GM10248 (cell line): ENCODE measurements at regions of chr11 and their contacts with region 1.

Region 1: GRCh38 chr11:76152086-76152681 is 54.1 kb downstream of the WNT11 start:
- DNase-seq: peak; percentile 91
- CTCF ChIP-seq: peak; percentile 99

Region 2: GRCh38 chr11:75717608-75718418 is 434.4 kb before region 1 on chr11 and contains the start of gene MOGAT2:
- CTCF ChIA-PET with region 1: interaction called, 19 read pairs
- POLR2A ChIA-PET with region 1: no interaction called
- DNase-seq: no peak
- CTCF ChIP-seq: no peak

Region 3: GRCh38 chr11:75814686-75815344 is 337.4 kb before region 1 on chr11 and contains the start of gene UVRAG:
- CTCF ChIA-PET with region 1: interaction called, 12 read pairs
- POLR2A ChIA-PET with region 1: no interaction called
- DNase-seq: peak; percentile 96
- CTCF ChIP-seq: no peak

Region 4: DNA sequence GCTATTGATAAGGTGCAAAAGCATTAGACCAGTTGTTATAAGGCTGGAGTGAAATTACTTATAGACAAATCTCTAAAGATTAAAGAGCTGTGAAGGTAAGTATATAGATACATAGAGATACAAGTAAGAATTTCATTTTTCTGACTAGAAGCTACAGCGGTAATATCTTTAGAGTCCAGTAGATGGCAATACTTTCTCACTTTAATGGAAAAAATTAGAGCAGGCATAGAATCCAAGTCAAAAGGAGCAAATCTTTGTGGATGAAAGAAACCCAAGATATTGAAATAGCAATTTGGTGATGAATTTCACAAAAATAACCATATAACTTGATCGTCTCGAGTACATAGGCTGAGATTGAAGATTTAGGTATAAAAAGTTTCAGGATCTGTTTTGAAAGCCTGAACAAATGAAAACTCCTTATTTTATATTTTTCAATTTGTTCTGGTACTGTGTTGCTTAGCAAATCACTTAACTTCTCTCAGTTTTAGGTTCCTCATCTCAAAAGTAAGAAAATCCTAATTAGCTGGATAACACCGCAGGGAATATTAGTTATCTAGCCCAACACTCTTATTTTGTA is 255.3 kb before region 1 on chr11:
- CTCF ChIA-PET with region 1: interaction called, 70 read pairs
- POLR2A ChIA-PET with region 1: no interaction called
- DNase-seq: no peak
- CTCF ChIP-seq: peak; percentile 31

Region 5: GRCh38 chr11:76056876-76057275 is 95.3 kb before region 1 on chr11:
- CTCF ChIA-PET with region 1: no interaction called
- POLR2A ChIA-PET with region 1: no interaction called
- DNase-seq: no peak
- CTCF ChIP-seq: no peak

Region 6: DNA sequence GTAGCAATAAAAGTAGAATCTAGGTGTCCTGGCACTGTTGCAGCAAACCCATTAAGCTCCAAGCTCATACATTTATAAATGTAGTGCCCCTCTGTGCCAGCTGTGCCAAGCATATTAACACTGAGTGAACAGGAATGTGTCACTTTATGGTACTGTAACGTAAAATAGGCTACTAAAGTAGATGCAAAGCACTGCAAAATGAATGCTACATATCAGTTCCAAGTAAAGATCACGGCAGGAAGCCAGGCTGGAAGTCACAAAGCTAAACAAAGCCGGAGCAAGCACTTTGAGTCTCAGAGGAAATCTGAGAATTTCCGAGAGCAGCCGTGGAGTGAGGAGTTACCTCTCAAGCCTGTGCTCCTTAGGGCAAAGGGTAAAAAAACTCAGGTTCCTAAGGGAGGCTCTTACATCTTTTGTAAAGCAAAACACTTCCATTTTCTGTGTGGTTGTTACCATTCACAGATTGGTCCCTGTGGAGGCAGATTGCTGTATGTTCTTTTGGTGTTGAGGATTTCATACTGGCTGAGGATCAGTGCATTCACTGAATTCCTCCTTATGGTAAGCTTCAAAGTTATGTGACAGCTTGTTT is 31.6 kb before region 1 on chr11:
- CTCF ChIA-PET with region 1: interaction called, 23 read pairs
- POLR2A ChIA-PET with region 1: no interaction called
- DNase-seq: no peak
- CTCF ChIP-seq: no peak

Region 7: GRCh38 chr11:76207642-76208401 is 55.6 kb after region 1 on chr11:
- CTCF ChIA-PET with region 1: interaction called, 13 read pairs
- POLR2A ChIA-PET with region 1: no interaction called
- DNase-seq: peak; percentile 91
- CTCF ChIP-seq: peak; percentile 93